Common myeloid progenitor, CD34-positive (primary cell): ENCODE measurements at regions of chr18 and their contacts with region 1.

Region 1: DNA sequence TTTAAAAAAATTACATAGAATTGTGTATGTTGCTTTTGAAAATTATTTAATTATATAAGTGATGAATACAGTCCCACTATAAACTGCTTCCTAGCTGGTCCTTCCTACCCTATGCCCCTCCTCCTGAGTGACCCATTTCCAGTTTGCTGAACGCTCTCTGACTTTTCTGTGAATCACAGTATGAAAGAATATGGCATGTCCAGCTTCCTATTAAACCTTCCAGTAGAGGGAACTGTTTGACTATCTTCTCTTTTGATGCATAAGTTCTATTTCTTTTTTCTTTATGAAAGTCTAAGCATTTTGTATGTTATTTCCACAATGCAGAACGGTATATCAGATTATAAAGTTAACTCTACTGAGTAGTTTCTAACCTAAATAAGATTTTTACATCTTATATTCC is 41.3 kb downstream of the PSMG2 start:
- DNase-seq: peak; percentile 68 to 83 (median 76)
- H3K4me3 ChIP-seq: no peak overlapping the region
- H3K27ac ChIP-seq: no peak overlapping the region
- H3K4me1 ChIP-seq: no peaks in the 10 kb centered on the region
- H3K27me3 ChIP-seq: no peaks in the 10 kb centered on the region

Region 2: DNA sequence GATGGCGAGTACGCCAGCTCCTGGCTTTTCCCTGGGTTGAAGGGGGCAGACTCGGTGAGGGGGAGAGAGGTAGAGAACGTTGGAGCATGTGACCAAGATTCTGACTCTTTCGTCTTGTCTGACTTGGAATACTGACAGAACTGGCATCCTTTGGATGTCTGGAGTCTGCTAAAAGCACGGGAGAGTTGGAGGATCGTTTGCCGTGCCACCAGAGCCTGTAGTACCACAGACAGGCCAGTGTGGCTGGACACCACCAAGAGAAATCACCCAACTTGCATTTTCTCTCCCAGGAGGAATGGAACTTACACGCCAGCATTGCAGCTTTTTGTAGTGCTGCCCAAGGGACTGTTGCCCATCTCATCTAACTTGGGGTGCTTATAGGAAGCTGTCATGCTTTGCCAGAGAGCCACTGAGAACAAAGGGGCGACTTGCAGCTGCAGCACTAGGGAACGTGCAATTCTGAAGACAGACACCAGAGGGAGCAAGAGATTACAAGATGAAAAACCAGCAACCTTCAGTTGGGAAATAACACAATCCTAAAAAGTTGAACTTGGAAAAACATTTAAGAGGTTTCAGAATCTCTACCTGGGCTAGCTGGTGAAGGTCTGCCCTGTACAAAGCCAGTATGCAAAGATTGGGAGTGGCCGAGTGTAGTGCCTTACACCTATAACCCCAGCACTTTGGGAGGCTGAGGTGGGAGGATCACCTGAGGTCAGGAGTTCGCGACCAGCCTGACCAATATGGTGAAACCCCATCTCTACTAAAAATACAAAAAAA is 17.1 kb before region 1 on chr18:
- CTCF ChIA-PET with region 1: interaction called, 106 read pairs
- POLR2A ChIA-PET with region 1: no interaction called
- DNase-seq: peak; percentile 72 to 85 (median 76)
- H3K4me3 ChIP-seq: no peak overlapping the region
- H3K27ac ChIP-seq: no peak overlapping the region
- H3K4me1 ChIP-seq: peaks cover 0 to 12% (median 9%) of the 10 kb centered on the region in 4 experiments
- H3K27me3 ChIP-seq: no peaks in the 10 kb centered on the region

Region 3: DNA sequence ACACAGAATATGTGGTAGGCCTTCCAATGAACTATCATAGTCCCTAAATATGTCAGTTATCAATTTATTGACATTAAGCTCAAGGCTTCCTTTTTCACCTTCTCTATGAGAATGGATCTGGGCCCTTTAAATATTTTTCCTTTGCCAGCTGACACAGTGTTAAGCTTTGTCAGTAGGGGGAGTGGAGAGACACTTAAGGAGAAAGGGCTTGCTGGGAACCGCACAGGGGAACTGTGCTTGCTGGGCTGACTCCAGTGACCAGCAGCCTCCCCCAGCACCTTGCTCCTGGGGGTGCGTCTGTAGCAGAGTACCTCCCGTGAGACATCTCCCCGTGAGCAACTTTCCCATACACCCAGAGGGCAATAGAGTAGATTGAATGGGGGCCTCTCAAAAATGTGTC is 146.4 kb after region 1 on chr18:
- CTCF ChIA-PET with region 1: interaction called, 21 read pairs
- POLR2A ChIA-PET with region 1: no interaction called
- DNase-seq: peak in 1 of 3 donors; percentile 20
- H3K4me3 ChIP-seq: no peak overlapping the region
- H3K27ac ChIP-seq: no peak overlapping the region
- H3K4me1 ChIP-seq: no peaks in the 10 kb centered on the region
- H3K27me3 ChIP-seq: peaks cover 0 to 6% (median 0%) of the 10 kb centered on the region in 5 experiments

Region 4: GRCh38 chr18:12946549-12947354 is 202.6 kb after region 1 on chr18:
- CTCF ChIA-PET with region 1: interaction called, 10 read pairs
- POLR2A ChIA-PET with region 1: no interaction called
- DNase-seq: peak; percentile 32 to 74 (median 71)
- H3K4me3 ChIP-seq: peak overlapping the region; percentile 73 to 90 (median 81)
- H3K27ac ChIP-seq: peak overlapping the region; percentile 70 to 92
- H3K4me1 ChIP-seq: peaks cover 0 to 26% (median 23%) of the 10 kb centered on the region in 4 experiments
- H3K27me3 ChIP-seq: no peaks in the 10 kb centered on the region